ENCODE measurements at regions of chr20 and their contacts with region 1.

Region 1: GRCh38 chr20:2523919-2524708 is 12.3 kb upstream of the TMC2 start:
- DNase-seq: peak; percentile 93
- ATAC-seq: peak; percentile 81
- H3K4me3 Mint-ChIP-seq: peak overlapping the region; percentile 87
- H3K27ac Mint-ChIP-seq: peak overlapping the region; percentile 86
- H3K4me1 Mint-ChIP-seq: peaks cover 26% of the 10 kb centered on the region
- H3K27me3 Mint-ChIP-seq: peaks cover 8% of the 10 kb centered on the region

Region 2: DNA sequence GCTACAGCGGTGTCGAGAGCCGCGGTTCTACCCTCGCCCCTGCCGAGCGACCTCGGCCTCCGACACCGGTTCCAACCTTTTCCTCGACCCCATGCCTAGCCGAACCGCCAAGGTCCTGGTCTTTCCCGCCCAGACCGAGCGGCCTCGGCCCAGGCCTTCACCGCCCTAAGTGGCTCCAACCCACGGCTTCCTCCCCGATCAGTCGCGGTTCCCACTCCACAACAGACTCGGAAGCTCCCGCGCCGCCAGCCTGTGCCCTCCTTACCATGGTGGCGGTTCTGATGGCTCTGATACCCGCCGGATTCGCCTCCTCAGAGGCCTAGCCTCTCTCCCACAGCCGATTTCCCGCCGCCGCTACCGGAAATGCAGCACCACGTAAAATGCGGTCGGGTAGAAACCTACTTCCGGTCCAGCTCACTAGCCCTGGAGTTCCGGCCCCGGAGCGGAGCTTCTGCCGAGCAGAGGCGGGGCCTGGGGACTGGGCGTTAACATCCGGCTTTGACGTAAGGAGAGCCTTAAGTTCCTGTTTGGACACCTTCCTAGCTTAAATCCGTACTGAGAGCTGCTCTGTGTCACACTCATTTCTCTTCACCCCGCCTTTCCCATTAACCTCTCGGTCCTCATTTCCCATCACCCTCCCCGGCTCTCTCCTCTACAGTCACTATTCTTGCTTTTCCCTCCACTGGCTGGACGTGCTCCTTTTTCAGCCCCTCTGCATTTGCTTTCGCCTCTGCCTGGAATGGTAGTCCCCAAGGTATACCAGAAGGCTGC is 53.5 kb before region 1 on chr20 and contains the start of gene SNRPB:
- CTCF ChIA-PET with region 1: interaction called, 46 read pairs
- POLR2A ChIA-PET with region 1: interaction called, 11 read pairs
- DNase-seq: peak; percentile 98
- ATAC-seq: peak; percentile 93
- H3K4me3 Mint-ChIP-seq: peak within 1 kb of the TSS; percentile 98
- H3K27ac Mint-ChIP-seq: peak within 1 kb of the TSS; percentile 100
- H3K4me1 Mint-ChIP-seq: peaks cover 52% of the 10 kb centered on the region
- H3K27me3 Mint-ChIP-seq: no peaks in the 10 kb centered on the region
- total RNA-seq, gene SNRPB: 338 to 339 TPM

Region 3: GRCh38 chr20:2508631-2509467 is 15.3 kb before region 1 on chr20 and contains the start of gene ZNF343:
- CTCF ChIA-PET with region 1: interaction called, 51 read pairs
- POLR2A ChIA-PET with region 1: interaction called, 8 read pairs
- DNase-seq: peak; percentile 88
- ATAC-seq: peak; percentile 94
- H3K4me3 Mint-ChIP-seq: peak within 1 kb of the TSS; percentile 99
- H3K27ac Mint-ChIP-seq: peak within 1 kb of the TSS; percentile 93
- H3K4me1 Mint-ChIP-seq: peaks cover 11% of the 10 kb centered on the region
- H3K27me3 Mint-ChIP-seq: peaks cover 17% of the 10 kb centered on the region
- total RNA-seq, gene ZNF343: 8.7 to 9.0 TPM

Region 4: DNA sequence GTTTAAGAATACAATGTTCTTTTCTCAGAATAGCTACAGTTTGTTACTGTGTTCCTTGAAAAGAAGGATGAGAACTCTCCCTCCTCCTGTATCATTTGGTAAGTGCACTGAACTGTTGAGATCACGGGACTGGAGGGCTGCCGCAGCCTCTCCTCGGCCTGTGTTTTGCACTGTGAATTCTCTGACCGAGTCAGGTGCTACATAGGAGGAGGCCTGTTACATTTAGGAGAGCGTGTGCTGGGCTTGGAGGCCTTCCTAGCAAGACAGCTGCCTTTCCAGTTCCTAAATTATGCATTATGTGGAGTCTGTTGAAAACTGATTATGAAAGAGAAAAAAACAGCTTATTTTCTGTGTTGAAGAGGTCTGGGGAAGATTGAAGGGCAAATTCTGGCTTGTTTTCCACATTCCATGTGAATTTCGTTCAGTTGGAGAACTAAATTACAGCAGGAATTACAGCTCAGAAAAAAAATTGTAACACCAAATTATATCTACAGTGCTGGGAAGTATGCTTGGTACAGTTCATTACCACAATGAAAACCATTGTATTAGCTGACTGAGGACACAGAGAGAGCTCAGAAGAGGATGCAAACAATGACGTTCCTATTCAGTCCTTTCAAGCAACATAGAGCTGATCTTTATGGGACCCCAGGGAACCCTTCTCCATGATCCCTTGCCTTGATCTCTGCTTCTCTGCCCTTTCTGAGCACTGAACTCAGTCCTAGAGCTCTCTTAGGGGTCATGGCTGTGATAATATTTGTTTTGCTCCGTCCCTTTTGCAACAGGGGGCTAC is 15.0 kb after region 1 on chr20:
- CTCF ChIA-PET with region 1: interaction called, 14 read pairs
- POLR2A ChIA-PET with region 1: no interaction called
- DNase-seq: no peak
- ATAC-seq: no peak
- H3K4me3 Mint-ChIP-seq: no peak overlapping the region
- H3K27ac Mint-ChIP-seq: no peak overlapping the region
- H3K4me1 Mint-ChIP-seq: no peaks in the 10 kb centered on the region
- H3K27me3 Mint-ChIP-seq: peaks cover 28% of the 10 kb centered on the region

Region 5: GRCh38 chr20:2651772-2652723 is 127.9 kb after region 1 on chr20 and contains the start of gene NOP56:
- CTCF ChIA-PET with region 1: interaction called, 50 read pairs
- POLR2A ChIA-PET with region 1: interaction called, 3 read pairs
- DNase-seq: peak; percentile 94
- ATAC-seq: peak; percentile 89
- H3K4me3 Mint-ChIP-seq: peak within 1 kb of the TSS; percentile 88
- H3K27ac Mint-ChIP-seq: peak within 1 kb of the TSS; percentile 89
- H3K4me1 Mint-ChIP-seq: peaks cover 50% of the 10 kb centered on the region
- H3K27me3 Mint-ChIP-seq: no peaks in the 10 kb centered on the region
- total RNA-seq, gene NOP56: 441 to 450 TPM

Region 6: GRCh38 chr20:2663887-2664719 is 140.0 kb after region 1 on chr20 and contains the start of gene IDH3B:
- CTCF ChIA-PET with region 1: interaction called, 10 read pairs
- POLR2A ChIA-PET with region 1: interaction called, 4 read pairs
- DNase-seq: peak; percentile 95
- ATAC-seq: peak; percentile 97
- H3K4me3 Mint-ChIP-seq: peak within 1 kb of the TSS; percentile 90
- H3K27ac Mint-ChIP-seq: peak within 1 kb of the TSS; percentile 99
- H3K4me1 Mint-ChIP-seq: peaks cover 29% of the 10 kb centered on the region
- H3K27me3 Mint-ChIP-seq: peaks cover 7% of the 10 kb centered on the region
- total RNA-seq, gene IDH3B: 99.6 to 100 TPM

Region 7: GRCh38 chr20:2671977-2672376 is 147.9 kb after region 1 on chr20:
- CTCF ChIA-PET with region 1: interaction called, 10 read pairs
- POLR2A ChIA-PET with region 1: no interaction called
- DNase-seq: no peak
- ATAC-seq: no peak
- H3K4me3 Mint-ChIP-seq: no peak overlapping the region
- H3K27ac Mint-ChIP-seq: no peak overlapping the region
- H3K4me1 Mint-ChIP-seq: no peaks in the 10 kb centered on the region
- H3K27me3 Mint-ChIP-seq: peaks cover 7% of the 10 kb centered on the region

Measured in activated CD8-positive, alpha-beta T cell treated with anti-CD3 and anti-CD28 coated beads, Interleukin-2, amount 10 ng/mL, durations not matched to agents 7 days and 5 days (primary cell).